Cardiac septum (tissue), 1 donor: ENCODE measurements at regions of chr15 and their contacts with region 1.

Region 1: GRCh38 chr15:66946578-66947164 is 118.7 kb upstream of the SMAD3 start:
- DNase-seq: no peak

Region 2: GRCh38 chr15:67303490-67304363 is 357.1 kb after region 1 on chr15:
- intact Hi-C with region 1: loop called (anchors 2 kb)
- DNase-seq: no peak

Region 3: GRCh38 chr15:67433495-67434099 is 486.9 kb after region 1 on chr15:
- intact Hi-C with region 1: loop called (anchors 5 kb)
- DNase-seq: no peak